MCF 10A (cell line): ENCODE measurements at regions of chr2 and their contacts with region 1.

Region 1: DNA sequence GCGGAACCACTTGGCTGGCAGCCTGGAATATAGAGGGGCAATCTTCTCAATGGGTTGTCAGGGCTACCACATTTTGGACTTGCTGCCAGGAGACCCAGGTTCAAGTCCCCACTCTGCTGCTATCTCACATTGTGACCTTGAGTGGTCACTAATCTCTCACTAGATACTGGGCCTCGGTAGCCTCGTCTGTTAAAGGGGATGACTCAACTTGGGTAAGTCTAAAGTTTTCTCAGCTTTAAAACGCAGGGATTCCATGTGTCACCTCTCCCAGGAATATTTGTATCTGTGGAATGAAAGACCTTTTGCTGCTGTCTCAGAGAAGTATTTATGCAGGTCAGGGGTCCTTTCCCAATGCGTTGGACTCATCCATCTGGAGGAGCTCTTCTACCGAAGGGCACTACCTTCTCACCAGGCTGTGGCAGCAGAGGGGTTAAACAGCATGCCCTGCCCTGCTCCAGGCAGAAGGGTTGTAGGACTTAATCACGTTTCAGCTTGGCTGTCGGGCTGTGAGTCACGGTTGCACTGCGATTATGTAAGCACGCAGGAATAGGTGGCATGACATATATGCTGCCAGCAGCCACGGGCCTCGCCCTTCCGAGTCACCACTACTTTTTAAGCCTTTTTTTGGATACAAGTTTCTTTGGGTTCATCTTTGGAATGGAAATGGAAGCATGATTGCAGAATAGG is 86.5 kb downstream of the SEMA4F start:
- DNase-seq: peak; percentile 98
- H3K4me3 Mint-ChIP-seq: peak overlapping the region; percentile 28
- H3K27ac Mint-ChIP-seq: peak overlapping the region; percentile 95
- H3K4me1 Mint-ChIP-seq: peaks cover 26% of the 10 kb centered on the region
- H3K27me3 Mint-ChIP-seq: no peaks in the 10 kb centered on the region
- CTCF ChIP-seq: no peak

Region 2: DNA sequence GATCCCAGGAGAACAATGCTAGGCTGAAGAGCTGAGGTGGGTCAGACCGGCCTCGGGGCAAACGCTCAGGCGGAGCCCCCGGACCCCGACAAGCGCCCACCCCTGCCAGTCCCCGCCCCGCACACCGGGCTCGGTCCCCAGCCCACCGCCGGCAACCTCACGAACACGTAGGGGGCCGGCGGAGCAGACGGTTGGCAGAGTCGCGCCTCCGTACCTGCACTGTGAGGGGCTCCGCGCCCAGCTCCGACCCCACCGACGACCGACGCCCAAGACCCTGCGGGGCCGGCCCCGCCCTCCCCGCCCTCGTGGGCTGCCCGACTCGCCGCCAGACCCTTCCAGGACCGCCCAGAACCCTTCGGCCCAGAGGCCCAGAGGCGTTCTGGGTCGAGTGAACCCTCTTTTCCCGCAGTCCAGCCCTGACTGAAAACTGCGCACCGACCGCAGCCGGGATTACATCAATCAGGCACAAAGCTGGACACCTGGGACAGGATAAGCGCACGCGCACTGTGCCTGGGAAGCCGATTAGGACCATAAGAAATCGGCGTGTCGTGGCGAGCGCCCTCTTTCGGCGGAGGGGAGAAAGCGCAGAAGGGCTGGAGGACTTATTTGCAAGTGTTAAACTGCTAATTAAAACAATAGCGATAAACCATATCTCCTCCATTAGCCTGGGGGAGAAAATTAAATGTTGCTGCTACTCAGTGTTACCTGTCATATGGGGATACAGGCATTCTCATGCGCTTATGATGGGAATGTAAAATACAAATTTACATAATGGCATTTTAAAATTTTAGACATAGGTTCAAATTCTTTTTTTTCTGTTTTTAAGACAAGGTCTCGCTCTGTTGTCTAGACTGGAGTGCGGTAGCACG is 348.7 kb before region 1 on chr2:
- CTCF ChIA-PET with region 1: no interaction called
- POLR2A ChIA-PET with region 1: no interaction called
- intact Hi-C with region 1: no loop called
- DNase-seq: peak; percentile 94
- H3K4me3 Mint-ChIP-seq: peak overlapping the region; percentile 79
- H3K27ac Mint-ChIP-seq: peak overlapping the region; percentile 91
- H3K4me1 Mint-ChIP-seq: no peaks in the 10 kb centered on the region
- H3K27me3 Mint-ChIP-seq: no peaks in the 10 kb centered on the region
- CTCF ChIP-seq: peak; percentile 91

Region 3: DNA sequence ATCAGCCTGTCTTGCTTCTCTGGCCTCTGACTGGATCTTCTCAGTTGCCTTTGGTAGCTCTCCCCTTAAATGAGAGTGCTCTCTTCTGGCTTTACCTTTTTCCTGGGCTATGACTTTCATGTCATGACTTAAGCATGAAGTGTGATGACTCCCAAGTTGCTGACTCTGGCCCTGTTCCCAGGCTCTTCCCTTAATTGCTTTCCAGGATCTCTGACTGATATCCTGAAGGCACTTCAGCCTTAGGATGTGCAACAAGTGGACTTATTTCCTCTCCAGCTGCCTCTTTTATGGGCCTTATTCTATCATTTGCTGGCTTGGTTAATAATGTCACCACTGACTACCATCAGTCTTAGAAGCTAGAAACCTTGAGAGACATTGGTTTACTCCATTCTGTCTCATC is 69.1 kb before region 1 on chr2:
- CTCF ChIA-PET with region 1: no interaction called
- POLR2A ChIA-PET with region 1: no interaction called
- intact Hi-C with region 1: no loop called
- DNase-seq: peak; percentile 55
- H3K4me3 Mint-ChIP-seq: no peak overlapping the region
- H3K27ac Mint-ChIP-seq: no peak overlapping the region
- H3K4me1 Mint-ChIP-seq: peaks cover 8% of the 10 kb centered on the region
- H3K27me3 Mint-ChIP-seq: no peaks in the 10 kb centered on the region
- CTCF ChIP-seq: no peak

Region 4: DNA sequence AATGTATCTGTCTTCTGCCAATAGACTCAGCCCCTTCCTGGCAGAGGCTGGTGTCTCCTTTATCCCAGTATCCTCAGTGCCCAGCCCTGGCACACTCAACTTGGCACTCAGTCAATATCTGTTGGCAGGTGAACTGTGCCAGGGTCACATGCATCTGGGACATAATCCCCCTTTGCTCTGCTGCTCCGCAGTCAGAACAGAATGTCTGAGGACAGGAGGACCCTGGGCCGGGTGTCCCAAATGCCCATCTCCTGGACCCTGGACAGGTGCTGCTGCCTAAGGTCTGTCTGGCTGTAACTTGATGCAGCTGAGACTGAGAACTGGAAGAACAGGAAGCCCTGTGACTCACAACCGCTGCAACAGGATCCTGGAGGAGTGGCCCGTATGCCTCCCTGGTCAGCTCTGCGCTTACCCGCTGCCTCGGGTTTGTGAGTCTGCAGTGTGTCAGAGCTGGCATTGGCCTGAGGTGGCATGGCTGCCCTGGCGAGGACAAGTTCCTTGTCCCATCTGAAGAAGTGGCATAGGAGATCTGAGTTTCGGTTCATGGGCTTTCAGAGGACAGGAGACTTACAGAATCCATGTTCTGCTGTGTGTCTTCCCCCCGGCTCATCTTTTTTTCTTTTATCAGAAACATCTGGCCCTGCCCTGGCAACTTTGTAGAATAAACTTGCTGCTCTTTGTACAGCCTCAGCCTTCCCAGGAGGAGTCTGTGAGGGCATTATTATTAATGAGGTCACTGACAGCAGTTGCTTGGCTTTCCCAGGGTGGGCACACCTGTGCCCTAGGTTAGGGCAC is 104.9 kb after region 1 on chr2:
- CTCF ChIA-PET with region 1: interaction called, 6 read pairs
- POLR2A ChIA-PET with region 1: interaction called, 15 read pairs
- intact Hi-C with region 1: no loop called
- DNase-seq: peak; percentile 96
- H3K4me3 Mint-ChIP-seq: peak overlapping the region; percentile 50
- H3K27ac Mint-ChIP-seq: peak overlapping the region; percentile 96
- H3K4me1 Mint-ChIP-seq: peaks cover 57% of the 10 kb centered on the region
- H3K27me3 Mint-ChIP-seq: no peaks in the 10 kb centered on the region
- CTCF ChIP-seq: no peak